HepG2 (cell line): ENCODE measurements at regions of chr9 and their contacts with region 1.

Region 1: GRCh38 chr9:89171695-89172315 is 6.8 kb downstream of the SHC3 start:
- DNase-seq: no peak
- ATAC-seq: peak; percentile 69
- H3K4me3 ChIP-seq: no peak overlapping the region
- H3K27ac ChIP-seq: no peak overlapping the region
- H3K4me1 ChIP-seq: 0 out of 2 replicates have a peak, but pooled peaks cover 7% of the 10 kb centered on the region
- H3K27me3 ChIP-seq: peaks cover 0 to 11% of the 10 kb centered on the region in 2 experiments; a peak in 2 of 5 replicates
- CTCF ChIP-seq: peak; percentile 55
- EP300 ChIP-seq: no peak
- POLR2A ChIP-seq: no peak
- RAD21 ChIP-seq: no peak

Region 2: GRCh38 chr9:89254772-89255123 is 82.9 kb after region 1 on chr9:
- CTCF ChIA-PET with region 1: no interaction called
- POLR2A ChIA-PET with region 1: no interaction called
- in situ Hi-C with region 1: no loop called
- intact Hi-C with region 1: no loop called
- DNase-seq: no peak
- ATAC-seq: peak; percentile 54
- H3K4me3 ChIP-seq: no peak overlapping the region
- H3K27ac ChIP-seq: no peak overlapping the region
- H3K4me1 ChIP-seq: no peaks in the 10 kb centered on the region
- H3K27me3 ChIP-seq: no peaks in the 10 kb centered on the region
- CTCF ChIP-seq: no peak
- EP300 ChIP-seq: no peak
- POLR2A ChIP-seq: no peak
- RAD21 ChIP-seq: no peak

Region 3: GRCh38 chr9:89278997-89279739 is 107.4 kb after region 1 on chr9:
- CTCF ChIA-PET with region 1: interaction called, 3 read pairs
- POLR2A ChIA-PET with region 1: no interaction called
- in situ Hi-C with region 1: no loop called
- intact Hi-C with region 1: loop called (anchors 1 kb)
- DNase-seq: peak; percentile 45
- ATAC-seq: peak; percentile 59
- H3K4me3 ChIP-seq: no peak overlapping the region
- H3K27ac ChIP-seq: no peak overlapping the region
- H3K4me1 ChIP-seq: no peaks in the 10 kb centered on the region
- H3K27me3 ChIP-seq: no peaks in the 10 kb centered on the region
- CTCF ChIP-seq: peak; percentile 53
- EP300 ChIP-seq: no peak
- POLR2A ChIP-seq: no peak
- RAD21 ChIP-seq: 0 out of 2 replicates have a peak, but pooled peaks have one; percentile 13

Region 4: GRCh38 chr9:89353989-89354388 is 182.2 kb after region 1 on chr9:
- CTCF ChIA-PET with region 1: no interaction called
- POLR2A ChIA-PET with region 1: no interaction called
- in situ Hi-C with region 1: no loop called
- intact Hi-C with region 1: no loop called
- DNase-seq: peak; percentile 66
- ATAC-seq: peak; percentile 55
- H3K4me3 ChIP-seq: no peak overlapping the region
- H3K27ac ChIP-seq: peak overlapping the region; percentile 10
- H3K4me1 ChIP-seq: peaks cover 77% of the 10 kb centered on the region
- H3K27me3 ChIP-seq: no peaks in the 10 kb centered on the region
- CTCF ChIP-seq: peak; percentile 23; the same call in 1 of the 2 replicates
- EP300 ChIP-seq: 0 out of 4 replicates have a peak, but pooled peaks of 1 of the 2 experiments have one; percentile 12
- POLR2A ChIP-seq: no peak
- RAD21 ChIP-seq: no peak